Activated CD4-positive, alpha-beta memory T cell treated with anti-CD3 and anti-CD28 coated beads for 36 hours (primary cell): ENCODE measurements at regions of chr2 and their contacts with region 1.

Region 1: DNA sequence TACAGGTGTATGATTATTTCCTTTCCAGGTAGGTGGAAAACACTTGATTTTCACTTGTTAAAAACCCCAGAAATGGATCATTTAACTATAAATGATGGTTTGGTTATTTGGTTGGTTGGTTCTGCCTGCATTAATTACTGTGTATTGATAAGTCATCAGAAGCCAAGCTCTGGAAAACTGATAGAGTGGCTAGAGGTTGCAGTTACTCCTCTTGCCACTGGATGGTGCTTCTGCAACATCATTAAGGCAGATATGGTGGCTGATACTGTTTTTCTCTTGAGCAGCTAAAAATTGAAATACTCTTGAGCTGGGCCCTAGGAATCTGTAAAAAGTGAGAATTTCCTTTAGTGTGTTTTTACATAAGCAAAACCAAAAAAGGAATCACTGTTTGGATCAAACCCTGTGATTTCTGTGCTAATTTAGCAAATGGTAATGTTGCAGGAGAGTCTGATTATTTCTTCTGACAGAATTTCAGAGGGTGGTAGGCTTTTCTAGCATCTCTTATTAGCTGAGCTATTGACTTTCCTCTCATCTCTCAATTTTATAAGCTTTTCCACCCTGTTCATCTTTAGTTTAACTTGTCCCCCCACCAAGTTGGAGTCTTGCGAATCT is 54.3 kb downstream of the RAB10 start:
- DNase-seq: peak; percentile 27
- H3K4me3 Mint-ChIP-seq: no peak overlapping the region
- H3K27ac Mint-ChIP-seq: no peak overlapping the region
- H3K4me1 Mint-ChIP-seq: peaks cover 58% of the 10 kb centered on the region
- H3K27me3 Mint-ChIP-seq: no peaks in the 10 kb centered on the region

Region 2: GRCh38 chr2:25951071-25951547 is 137.0 kb before region 1 on chr2:
- CTCF ChIA-PET with region 1: no interaction called
- POLR2A ChIA-PET with region 1: no interaction called
- intact Hi-C with region 1: loop called (anchors 5 kb)
- DNase-seq: peak; percentile 81
- H3K4me3 Mint-ChIP-seq: no peak overlapping the region
- H3K27ac Mint-ChIP-seq: no peak overlapping the region
- H3K4me1 Mint-ChIP-seq: no peaks in the 10 kb centered on the region
- H3K27me3 Mint-ChIP-seq: no peaks in the 10 kb centered on the region

Region 3: GRCh38 chr2:26033818-26034636 is 54.1 kb before region 1 on chr2 and contains the start of gene RAB10:
- CTCF ChIA-PET with region 1: interaction called, 10 read pairs
- POLR2A ChIA-PET with region 1: interaction called, 13 read pairs
- intact Hi-C with region 1: loop called (anchors 1 kb)
- DNase-seq: peak; percentile 100
- H3K4me3 Mint-ChIP-seq: peak within 1 kb of the TSS; percentile 96
- H3K27ac Mint-ChIP-seq: peak within 1 kb of the TSS; percentile 91
- H3K4me1 Mint-ChIP-seq: peaks cover 24% of the 10 kb centered on the region
- H3K27me3 Mint-ChIP-seq: no peaks in the 10 kb centered on the region
- total RNA-seq, gene RAB10: 110 to 119 TPM

Region 4: DNA sequence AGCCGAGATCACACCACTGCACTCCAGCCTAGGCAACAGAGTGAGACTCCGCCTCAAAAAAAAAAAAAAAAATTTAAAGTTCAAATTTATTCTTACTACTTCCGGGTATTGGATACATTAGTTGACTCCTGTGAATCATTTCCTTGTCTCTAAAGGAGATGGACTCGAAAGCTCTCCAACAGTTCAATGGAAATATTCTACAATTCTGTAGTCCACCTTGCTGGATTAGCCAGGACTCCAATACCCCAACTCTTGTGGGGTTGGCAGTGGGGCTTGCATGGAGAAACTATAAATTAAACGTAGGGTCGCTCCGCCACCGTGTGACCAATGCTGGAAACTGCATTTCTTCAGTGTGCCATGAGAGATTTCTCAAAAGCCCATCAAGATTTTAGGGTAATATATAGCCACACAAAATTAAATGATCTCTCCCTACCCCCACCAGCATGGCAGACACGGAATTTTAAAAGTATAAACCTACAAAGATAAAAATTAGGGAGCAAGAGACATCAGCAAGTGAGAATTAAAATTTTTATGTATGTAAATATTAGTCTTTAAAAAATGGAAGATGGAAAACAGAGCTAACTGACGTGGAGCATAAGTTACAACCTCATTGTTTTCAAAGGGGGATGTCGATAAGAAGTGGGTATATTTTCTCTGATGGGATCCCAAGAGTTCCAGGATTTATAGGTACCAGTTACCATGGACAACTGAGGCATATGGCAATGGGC is 57.0 kb after region 1 on chr2:
- CTCF ChIA-PET with region 1: interaction called, 6 read pairs
- POLR2A ChIA-PET with region 1: no interaction called
- intact Hi-C with region 1: loop called (anchors 5 kb)
- DNase-seq: peak; percentile 78
- H3K4me3 Mint-ChIP-seq: no peak overlapping the region
- H3K27ac Mint-ChIP-seq: no peak overlapping the region
- H3K4me1 Mint-ChIP-seq: peaks cover 2% of the 10 kb centered on the region
- H3K27me3 Mint-ChIP-seq: peaks cover 13% of the 10 kb centered on the region

Region 5: DNA sequence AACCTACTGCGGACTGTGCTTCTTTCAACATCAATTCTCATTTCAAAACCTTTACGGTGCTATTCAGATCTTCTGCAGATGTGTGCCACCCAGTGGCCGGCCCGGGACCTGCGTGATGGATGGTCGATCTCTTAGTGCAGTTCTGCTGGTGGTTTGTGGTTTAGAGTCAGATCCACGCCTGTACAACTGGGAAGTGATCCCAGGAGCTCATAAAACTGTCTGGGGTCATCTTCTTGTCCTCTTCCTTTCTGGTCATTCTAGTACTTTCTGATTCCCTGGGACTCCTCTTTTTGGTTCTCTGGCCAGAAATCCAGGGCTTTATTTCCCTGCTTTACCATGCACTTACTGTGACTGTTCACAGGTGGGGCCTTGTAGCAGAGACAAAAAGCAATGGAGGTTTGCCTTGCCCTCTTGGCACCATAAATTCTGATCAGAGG is 242.0 kb after region 1 on chr2:
- CTCF ChIA-PET with region 1: interaction called, 3 read pairs
- POLR2A ChIA-PET with region 1: no interaction called
- intact Hi-C with region 1: loop called (anchors 10 kb)
- DNase-seq: peak; percentile 92
- H3K4me3 Mint-ChIP-seq: peak overlapping the region; percentile 10
- H3K27ac Mint-ChIP-seq: no peak overlapping the region
- H3K4me1 Mint-ChIP-seq: peaks cover 12% of the 10 kb centered on the region
- H3K27me3 Mint-ChIP-seq: no peaks in the 10 kb centered on the region